SK-N-SH (cell line): ENCODE measurements at regions of chr3 and their contacts with region 1.

Region 1: DNA sequence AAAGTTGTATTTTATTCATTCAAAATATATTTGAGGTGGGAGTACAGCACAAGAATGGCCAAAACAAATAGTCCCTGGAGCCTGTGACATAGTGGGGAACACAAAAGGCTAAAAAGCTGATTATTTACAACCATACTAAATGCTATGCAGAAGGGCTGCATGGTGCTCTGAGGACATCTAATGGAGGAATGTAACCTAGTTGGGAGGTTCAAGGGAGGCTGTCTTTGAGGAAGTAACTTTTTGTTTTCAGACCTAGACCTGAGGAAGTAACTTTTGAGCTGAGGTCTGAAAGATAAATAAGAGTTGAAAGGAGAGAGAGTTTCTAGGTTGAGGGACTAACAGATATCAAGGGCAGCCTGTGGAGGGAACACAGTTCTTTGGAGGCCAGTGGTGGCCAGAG is 34.8 kb upstream of the RASA2 start:
- DNase-seq: no peak
- H3K4me3 ChIP-seq: no peak overlapping the region
- H3K27ac ChIP-seq: no peak overlapping the region
- H3K4me1 ChIP-seq: peaks cover 4 to 16% of the 10 kb centered on the region in 2 experiments; a peak in 2 of 4 replicates
- H3K27me3 ChIP-seq: no peaks in the 10 kb centered on the region
- CTCF ChIP-seq: peak; percentile 80
- EP300 ChIP-seq: no peak
- RAD21 ChIP-seq: peak; percentile 84

Region 2: GRCh38 chr3:141311496-141312353 is 140.3 kb before region 1 on chr3:
- CTCF ChIA-PET with region 1: interaction called, 40 read pairs
- POLR2A ChIA-PET with region 1: interaction called, 4 read pairs
- DNase-seq: peak; percentile 91
- H3K4me3 ChIP-seq: peak overlapping the region; percentile 73 to 77
- H3K27ac ChIP-seq: peak overlapping the region; percentile 44 to 82; a peak in 3 of 4 replicates
- H3K4me1 ChIP-seq: peaks cover 0 to 15% of the 10 kb centered on the region in 2 experiments; a peak in 2 of 4 replicates
- H3K27me3 ChIP-seq: no peaks in the 10 kb centered on the region
- CTCF ChIP-seq: peak; percentile 76
- EP300 ChIP-seq: 0 out of 4 replicates have a peak, but pooled peaks of 1 of the 2 experiments have one; percentile 26
- RAD21 ChIP-seq: peak; percentile 83

Region 3: DNA sequence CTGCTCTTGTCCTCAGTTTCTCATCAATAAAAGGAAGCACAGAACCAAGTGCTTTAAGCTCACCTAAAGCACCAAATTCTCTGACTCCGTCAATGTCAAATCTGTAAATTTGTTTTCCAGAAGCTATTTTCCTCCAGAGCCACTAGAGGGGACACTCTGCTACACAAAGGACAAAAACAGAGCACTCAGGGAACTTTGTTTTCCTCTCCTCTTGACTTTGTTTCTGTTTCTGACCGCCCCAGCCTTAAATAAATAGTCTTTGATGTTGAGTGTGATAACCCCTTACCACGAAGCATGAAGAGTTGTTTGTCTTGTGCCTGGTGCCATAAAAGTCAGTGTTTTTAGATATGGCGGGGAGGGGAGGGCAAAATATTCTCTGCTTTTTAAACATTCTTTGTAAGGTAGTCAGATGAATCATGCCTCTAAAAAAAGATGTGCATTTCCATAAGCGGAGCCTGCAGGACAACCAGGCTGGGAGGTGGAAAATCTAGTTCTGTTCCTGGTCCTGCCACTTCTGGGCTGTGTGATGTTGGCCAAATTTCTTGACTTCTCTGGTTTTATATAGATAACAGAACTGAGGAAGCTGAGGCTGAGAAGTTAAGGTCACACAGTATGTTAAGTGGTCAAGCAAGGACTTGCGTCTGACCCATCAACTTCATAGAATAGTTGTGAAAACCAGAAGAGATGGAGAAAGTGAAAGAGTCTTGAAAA is 91.0 kb before region 1 on chr3:
- CTCF ChIA-PET with region 1: interaction called, 123 read pairs
- POLR2A ChIA-PET with region 1: no interaction called
- DNase-seq: peak; percentile 70
- H3K4me3 ChIP-seq: peak overlapping the region in 1 of 2 experiments; percentile 36; a peak in 1 of 4 replicates
- H3K27ac ChIP-seq: peak overlapping the region; percentile 53 to 61; a peak in 3 of 4 replicates
- H3K4me1 ChIP-seq: peaks cover 2 to 17% of the 10 kb centered on the region in 2 experiments; a peak in 2 of 4 replicates
- H3K27me3 ChIP-seq: no peaks in the 10 kb centered on the region
- CTCF ChIP-seq: peak; percentile 86
- EP300 ChIP-seq: peak in 1 of 2 experiments; percentile 63; a peak in 2 of 4 replicates
- RAD21 ChIP-seq: peak; percentile 93

Region 4: GRCh38 chr3:141386611-141387111 is 65.4 kb before region 1 on chr3:
- CTCF ChIA-PET with region 1: interaction called, 21 read pairs
- POLR2A ChIA-PET with region 1: no interaction called
- DNase-seq: no peak
- H3K4me3 ChIP-seq: peak overlapping the region; percentile 19 to 45; a peak in 3 of 4 replicates
- H3K27ac ChIP-seq: peak overlapping the region; percentile 11 to 94; a peak in 3 of 4 replicates
- H3K4me1 ChIP-seq: peaks cover 7 to 19% of the 10 kb centered on the region in 2 experiments; a peak in 3 of 4 replicates
- H3K27me3 ChIP-seq: no peaks in the 10 kb centered on the region
- CTCF ChIP-seq: no peak
- EP300 ChIP-seq: no peak
- RAD21 ChIP-seq: 0 out of 2 replicates have a peak, but pooled peaks have one; percentile 9

Region 5: DNA sequence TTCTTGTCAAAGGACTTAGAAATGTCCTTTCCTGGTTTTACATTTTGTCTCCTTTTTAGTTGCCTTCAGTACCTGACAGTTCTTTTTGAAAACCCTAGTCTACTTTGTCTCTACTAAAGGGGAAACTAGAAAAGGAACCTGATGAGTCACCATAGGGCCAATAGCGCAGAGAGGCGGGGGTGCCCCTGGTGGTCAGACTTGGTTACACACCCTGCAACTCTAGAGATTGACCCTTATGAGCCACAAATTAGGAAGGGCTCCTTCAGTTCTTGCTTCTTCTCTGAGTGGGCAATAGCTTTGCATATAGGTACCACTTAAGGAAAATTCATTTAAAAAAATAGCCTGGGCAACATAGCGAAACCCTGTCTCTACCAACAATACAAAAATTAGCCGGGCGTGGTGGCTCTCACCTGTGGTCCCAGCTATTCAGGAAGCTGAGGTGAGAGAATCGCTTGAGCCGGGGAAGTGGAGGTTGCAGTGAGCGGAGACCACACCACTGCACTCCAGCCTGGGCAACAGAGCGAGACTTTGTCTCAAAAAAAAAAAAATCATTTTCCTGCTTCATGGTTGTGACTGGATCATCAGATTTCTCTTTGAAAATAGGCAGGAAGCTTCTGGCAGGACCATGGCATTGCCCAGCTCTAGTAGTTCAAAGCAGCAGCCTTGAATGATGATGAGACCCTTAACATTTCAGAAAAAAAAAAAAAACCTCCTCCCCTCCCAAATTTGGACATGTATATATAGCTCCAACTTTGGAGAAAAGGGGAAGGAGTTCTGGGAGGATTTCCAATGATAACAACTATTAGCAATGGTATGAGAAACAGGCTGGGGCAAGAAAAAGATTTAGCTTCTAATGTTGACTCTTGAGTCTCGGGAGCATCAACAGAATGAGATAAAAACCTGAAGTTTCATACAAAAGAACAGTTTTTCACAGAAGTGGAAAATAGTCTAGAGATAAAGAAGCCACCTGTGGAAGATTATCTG is 10.4 kb before region 1 on chr3:
- CTCF ChIA-PET with region 1: interaction called, 28 read pairs
- POLR2A ChIA-PET with region 1: no interaction called
- DNase-seq: peak; percentile 69
- H3K4me3 ChIP-seq: no peak overlapping the region; a peak in 1 of 4 replicates
- H3K27ac ChIP-seq: peak overlapping the region in 1 of 2 experiments; percentile 51; a peak in 3 of 4 replicates
- H3K4me1 ChIP-seq: peaks cover 0 to 9% of the 10 kb centered on the region in 2 experiments; a peak in 2 of 4 replicates
- H3K27me3 ChIP-seq: no peaks in the 10 kb centered on the region
- CTCF ChIP-seq: peak; percentile 95
- EP300 ChIP-seq: no peak
- RAD21 ChIP-seq: peak; percentile 63

Region 6: DNA sequence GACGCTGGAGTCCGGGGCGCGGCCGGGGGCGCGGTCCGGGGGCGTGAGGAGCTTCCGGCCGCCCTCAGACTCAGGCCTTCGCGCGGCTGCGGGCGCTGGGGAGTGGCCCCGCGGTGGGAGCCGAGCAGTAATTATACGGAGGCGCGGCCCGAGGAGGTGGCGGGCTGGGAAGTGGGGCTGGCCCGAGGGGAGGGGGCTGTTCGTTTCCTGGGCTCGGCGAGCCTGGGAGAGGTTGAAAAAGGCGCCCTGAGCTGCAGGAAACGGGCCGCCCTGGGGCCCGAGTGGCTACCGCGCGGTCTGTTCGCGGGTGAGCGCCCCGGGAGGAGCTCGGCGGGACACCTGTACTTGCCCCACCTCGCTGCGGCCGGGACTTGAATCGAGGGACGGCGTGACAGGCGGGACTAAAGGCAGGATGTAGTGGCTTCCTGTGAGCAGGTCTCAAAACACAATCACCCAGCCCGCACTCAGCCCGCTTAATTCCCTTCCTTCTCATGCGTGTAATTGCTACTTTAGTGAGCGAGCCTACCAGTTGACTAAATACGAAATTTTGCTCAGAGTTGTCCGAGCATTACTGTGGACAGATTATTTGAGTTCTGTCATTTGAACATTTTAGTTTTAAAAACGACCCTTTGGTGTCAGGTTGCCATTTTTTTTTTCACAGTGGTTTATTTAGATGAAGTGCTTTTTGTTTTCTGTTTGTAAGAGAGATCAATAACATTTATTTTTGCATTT is 35.7 kb after region 1 on chr3:
- CTCF ChIA-PET with region 1: interaction called, 10 read pairs
- POLR2A ChIA-PET with region 1: interaction called, 3 read pairs
- DNase-seq: peak; percentile 84
- H3K4me3 ChIP-seq: peak overlapping the region; percentile 68 to 80
- H3K27ac ChIP-seq: peak overlapping the region; percentile 83 to 87
- H3K4me1 ChIP-seq: peaks cover 7 to 25% of the 10 kb centered on the region in 2 experiments; a peak in 3 of 4 replicates
- H3K27me3 ChIP-seq: no peaks in the 10 kb centered on the region
- CTCF ChIP-seq: no peak
- EP300 ChIP-seq: no peak
- RAD21 ChIP-seq: no peak

Region 7: DNA sequence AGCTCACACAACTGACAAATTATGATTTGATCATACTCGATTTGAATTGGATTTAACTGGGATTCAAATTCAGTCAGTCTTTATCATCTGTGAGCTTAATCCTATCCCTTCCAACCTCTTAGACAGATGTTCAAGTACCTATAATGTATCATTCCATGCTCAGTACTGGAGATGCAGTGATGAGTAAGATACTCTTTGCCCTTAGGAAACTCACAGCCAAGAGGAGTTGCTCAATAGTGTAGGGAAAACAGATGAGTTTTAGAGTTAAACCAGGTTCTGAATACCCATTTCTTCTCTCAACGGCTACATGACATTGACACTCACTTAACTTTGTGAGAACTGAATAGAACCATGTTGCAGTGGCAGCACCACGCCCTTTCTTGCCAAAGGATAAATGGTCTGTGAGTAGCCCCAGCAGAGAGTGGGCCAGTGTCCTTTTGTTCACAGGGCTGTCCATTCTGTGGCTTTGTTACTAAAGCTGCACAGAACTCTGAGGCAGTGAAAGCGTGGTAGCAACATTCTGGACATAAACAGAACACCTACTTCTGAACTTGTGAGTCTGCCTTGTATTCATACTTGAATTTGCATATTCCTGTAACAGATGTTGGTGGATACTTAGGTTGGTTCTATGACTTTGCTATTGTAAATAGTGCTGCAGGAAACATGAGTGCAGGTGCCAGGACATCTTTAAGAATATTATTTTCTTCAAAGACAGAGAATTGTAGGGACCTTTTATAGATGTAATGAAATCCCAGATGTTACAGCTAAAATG is 126.4 kb after region 1 on chr3:
- CTCF ChIA-PET with region 1: no interaction called
- POLR2A ChIA-PET with region 1: no interaction called
- DNase-seq: no peak
- H3K4me3 ChIP-seq: no peak overlapping the region
- H3K27ac ChIP-seq: no peak overlapping the region
- H3K4me1 ChIP-seq: no peaks in the 10 kb centered on the region
- H3K27me3 ChIP-seq: no peaks in the 10 kb centered on the region
- CTCF ChIP-seq: no peak
- EP300 ChIP-seq: no peak
- RAD21 ChIP-seq: no peak

Region 8: DNA sequence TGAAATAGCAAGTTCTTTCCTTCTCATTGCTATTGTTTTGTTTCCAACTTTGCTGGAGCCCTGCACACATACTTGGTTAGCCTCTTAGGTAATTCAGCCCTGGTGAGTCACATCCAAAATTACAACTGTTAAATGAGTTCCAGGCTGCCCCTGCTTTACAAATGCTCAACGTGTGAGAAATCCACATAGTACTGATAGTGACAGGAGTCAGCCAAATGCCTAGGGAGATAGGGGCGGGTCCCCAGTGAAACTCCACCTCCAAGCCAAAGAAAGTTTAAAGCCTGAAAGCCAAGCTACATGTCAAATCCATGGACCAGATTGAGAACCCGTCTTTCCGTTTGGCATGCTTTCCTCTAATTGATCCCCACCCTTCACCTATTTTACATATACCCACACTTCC is 204.8 kb after region 1 on chr3:
- CTCF ChIA-PET with region 1: no interaction called
- POLR2A ChIA-PET with region 1: no interaction called
- DNase-seq: no peak
- H3K4me3 ChIP-seq: no peak overlapping the region
- H3K27ac ChIP-seq: no peak overlapping the region
- H3K4me1 ChIP-seq: peaks cover 3 to 6% of the 10 kb centered on the region in 2 experiments; a peak in 2 of 4 replicates
- H3K27me3 ChIP-seq: no peaks in the 10 kb centered on the region
- CTCF ChIP-seq: no peak
- EP300 ChIP-seq: no peak
- RAD21 ChIP-seq: no peak

Region 9: GRCh38 chr3:141789281-141789680 is 337.2 kb after region 1 on chr3:
- CTCF ChIA-PET with region 1: no interaction called
- POLR2A ChIA-PET with region 1: no interaction called
- DNase-seq: no peak
- H3K4me3 ChIP-seq: no peak overlapping the region
- H3K27ac ChIP-seq: no peak overlapping the region
- H3K4me1 ChIP-seq: no peaks in the 10 kb centered on the region
- H3K27me3 ChIP-seq: no peaks in the 10 kb centered on the region
- CTCF ChIP-seq: no peak
- EP300 ChIP-seq: no peak
- RAD21 ChIP-seq: no peak

Region 10: GRCh38 chr3:142288032-142288638 is 836.1 kb after region 1 on chr3:
- CTCF ChIA-PET with region 1: no interaction called
- POLR2A ChIA-PET with region 1: no interaction called
- DNase-seq: no peak
- H3K4me3 ChIP-seq: no peak overlapping the region
- H3K27ac ChIP-seq: no peak overlapping the region
- H3K4me1 ChIP-seq: no peaks in the 10 kb centered on the region
- H3K27me3 ChIP-seq: no peaks in the 10 kb centered on the region
- CTCF ChIP-seq: no peak
- EP300 ChIP-seq: no peak
- RAD21 ChIP-seq: no peak